Psoas muscle (tissue), 8 donors: ENCODE measurements at regions of chr20 and their contacts with region 1.

Region 1: DNA sequence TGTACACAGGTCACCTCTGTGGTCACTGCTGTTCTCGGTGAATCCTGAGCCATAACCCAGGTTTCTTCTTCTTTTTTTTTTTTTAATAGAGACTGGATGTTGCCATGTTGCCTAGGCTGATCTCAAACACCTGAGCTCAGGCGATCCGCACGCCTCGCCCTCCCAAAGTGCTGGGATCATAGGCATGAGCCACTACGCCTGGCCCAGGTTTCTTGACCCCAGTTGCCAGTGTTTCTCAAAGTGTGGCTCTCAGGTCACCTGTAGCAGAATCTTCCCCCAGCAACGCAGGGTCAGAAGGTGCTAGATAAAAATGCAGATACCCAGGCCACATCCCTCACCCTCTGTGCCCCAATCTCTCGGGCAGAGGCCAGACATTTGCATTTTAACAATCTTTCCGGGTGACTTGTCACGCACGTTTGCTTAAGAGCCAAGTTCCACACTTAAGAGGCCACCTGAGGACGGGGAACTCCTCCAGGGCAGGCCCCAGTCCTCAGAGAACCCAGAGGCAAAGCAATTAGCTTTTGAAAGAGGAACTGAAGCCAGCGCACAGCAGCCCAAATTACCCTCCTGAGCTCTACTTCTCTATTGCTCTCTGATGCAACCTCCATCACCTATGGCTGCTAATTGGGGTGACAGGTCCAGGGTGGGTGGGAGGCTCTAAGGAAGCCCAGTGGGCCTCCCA is 81.8 kb downstream of the NFATC2 start:
- DNase-seq: no peak
- ATAC-seq: no peak
- H3K4me3 ChIP-seq: no peak overlapping the region
- H3K27ac ChIP-seq: no peak overlapping the region
- H3K4me1 ChIP-seq: peaks cover 21% of the 10 kb centered on the region
- H3K27me3 ChIP-seq: no peaks in the 10 kb centered on the region
- CTCF ChIP-seq: no peak

Region 2: DNA sequence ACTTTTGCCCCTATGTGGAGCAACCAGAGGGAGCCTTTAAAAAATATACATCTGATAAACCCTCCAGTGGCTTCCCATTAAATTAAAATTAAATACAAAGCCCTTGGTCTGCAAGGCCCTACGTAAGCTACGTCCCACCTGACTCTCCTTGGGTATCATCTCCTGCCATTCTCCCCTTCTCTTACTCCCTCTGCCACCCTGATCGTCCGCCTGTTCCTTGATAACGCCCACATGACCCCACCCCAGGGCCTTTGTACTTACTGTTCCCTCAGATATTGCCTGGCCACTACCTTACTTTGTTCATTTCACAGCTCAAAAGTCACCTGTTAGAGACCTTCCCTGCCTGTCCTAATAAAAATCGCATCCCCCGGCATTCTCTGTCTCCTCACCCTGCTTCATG is 87.2 kb after region 1 on chr20:
- intact Hi-C with region 1: loop called in 1 of 2 experiments (anchors 5 kb)
- DNase-seq: no peak
- ATAC-seq: no peak
- H3K4me3 ChIP-seq: no peak overlapping the region
- H3K27ac ChIP-seq: no peak overlapping the region
- H3K4me1 ChIP-seq: peaks cover 5% of the 10 kb centered on the region
- H3K27me3 ChIP-seq: no peaks in the 10 kb centered on the region
- CTCF ChIP-seq: no peak